Activated naive CD4-positive, alpha-beta T cell treated with anti-CD3 and anti-CD28 coated beads for 36 hours (primary cell): ENCODE measurements at regions of chr18 and their contacts with region 1.

Region 1: DNA sequence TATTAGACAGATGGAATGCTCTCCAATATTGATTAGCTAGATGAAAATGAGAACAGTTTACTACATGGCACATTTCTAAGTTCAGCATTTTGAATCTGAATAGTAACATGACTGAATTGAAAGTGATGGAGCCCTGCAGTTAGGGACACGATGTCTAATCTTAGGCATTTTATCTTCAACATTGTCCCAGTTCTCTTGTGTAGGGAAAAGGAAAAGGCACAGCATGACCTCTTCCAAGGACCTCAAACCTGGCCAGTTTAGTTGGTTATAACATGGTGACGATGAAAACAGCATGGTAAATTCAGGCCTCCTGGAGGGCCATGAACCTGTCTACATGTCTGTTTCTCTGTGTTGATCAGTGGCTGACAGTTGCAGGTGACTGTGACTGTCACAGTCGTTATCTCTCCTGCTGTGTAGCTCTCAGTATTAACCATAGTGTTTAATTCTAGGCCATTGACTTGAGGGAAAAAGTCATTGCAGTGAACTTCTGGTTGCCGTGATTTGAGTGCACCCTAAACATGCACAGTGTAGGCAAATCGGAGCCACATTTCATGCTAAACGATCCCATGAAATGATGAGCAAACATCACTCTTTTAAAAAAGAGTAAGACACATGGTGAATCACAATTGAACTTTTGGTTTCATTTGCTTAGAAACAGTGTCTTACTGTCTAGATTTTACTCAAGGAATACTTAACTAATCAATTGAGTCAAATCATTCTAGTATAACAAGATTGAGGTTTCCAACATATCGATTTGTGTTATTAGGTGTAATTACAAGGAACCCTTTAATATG is 129.7 kb downstream of the PHLPP1 start:
- DNase-seq: peak; percentile 57
- H3K4me3 Mint-ChIP-seq: no peak overlapping the region
- H3K27ac Mint-ChIP-seq: peak overlapping the region; percentile 24
- H3K4me1 Mint-ChIP-seq: peaks cover 24% of the 10 kb centered on the region
- H3K27me3 Mint-ChIP-seq: no peaks in the 10 kb centered on the region

Region 2: GRCh38 chr18:62281684-62282083 is 563.4 kb before region 1 on chr18:
- CTCF ChIA-PET with region 1: no interaction called
- intact Hi-C with region 1: loop called (anchors 1 kb)
- DNase-seq: no peak
- H3K4me3 Mint-ChIP-seq: no peak overlapping the region
- H3K27ac Mint-ChIP-seq: no peak overlapping the region
- H3K4me1 Mint-ChIP-seq: peaks cover 39% of the 10 kb centered on the region
- H3K27me3 Mint-ChIP-seq: no peaks in the 10 kb centered on the region

Region 3: GRCh38 chr18:62741118-62741566 is 103.9 kb before region 1 on chr18:
- CTCF ChIA-PET with region 1: no interaction called
- intact Hi-C with region 1: loop called (anchors 1 kb)
- DNase-seq: peak; percentile 66
- H3K4me3 Mint-ChIP-seq: no peak overlapping the region
- H3K27ac Mint-ChIP-seq: no peak overlapping the region
- H3K4me1 Mint-ChIP-seq: peaks cover 16% of the 10 kb centered on the region
- H3K27me3 Mint-ChIP-seq: no peaks in the 10 kb centered on the region

Region 4: DNA sequence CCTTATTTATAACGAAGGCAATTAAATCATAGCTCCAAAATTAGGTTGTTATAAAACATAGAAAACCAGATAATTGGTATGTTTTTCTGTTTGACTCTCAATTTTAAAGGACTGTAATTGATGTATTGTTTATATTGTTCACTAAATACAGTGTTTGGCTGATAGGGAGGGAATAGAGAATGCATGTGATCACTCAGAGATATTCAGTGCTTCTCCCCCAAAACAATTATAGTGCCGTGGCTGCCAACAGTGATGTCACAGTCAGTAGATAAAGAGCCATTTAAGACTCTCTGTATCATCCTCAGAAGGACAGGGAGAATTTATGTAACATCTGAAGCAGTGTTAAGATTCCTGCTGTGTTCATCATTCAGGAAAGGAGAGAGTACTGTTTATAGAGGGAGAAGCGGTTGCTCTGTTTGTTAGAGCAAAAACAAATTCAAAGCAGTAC is 60.1 kb before region 1 on chr18:
- CTCF ChIA-PET with region 1: no interaction called
- intact Hi-C with region 1: loop called (anchors 1 kb)
- DNase-seq: no peak
- H3K4me3 Mint-ChIP-seq: no peak overlapping the region
- H3K27ac Mint-ChIP-seq: no peak overlapping the region
- H3K4me1 Mint-ChIP-seq: peaks cover 37% of the 10 kb centered on the region
- H3K27me3 Mint-ChIP-seq: peaks cover 5% of the 10 kb centered on the region

Region 5: DNA sequence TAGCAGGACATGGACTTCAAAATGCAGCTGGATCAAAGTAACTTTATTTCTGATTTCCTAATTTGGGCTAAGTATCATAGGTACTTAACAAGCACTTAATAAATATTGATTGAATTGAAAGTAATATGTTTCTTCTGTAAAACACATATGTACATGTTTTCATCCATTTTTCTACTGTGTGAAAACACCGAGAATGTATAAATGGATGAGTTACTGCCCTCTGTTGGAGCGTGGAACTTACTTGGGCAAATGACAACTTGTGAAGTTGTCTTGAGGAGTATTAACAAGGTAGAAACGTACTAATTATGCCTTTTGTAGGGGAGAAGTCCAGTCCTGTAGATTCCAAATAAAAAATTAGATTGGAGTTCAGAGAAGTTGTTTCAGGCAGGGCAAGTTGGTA is 42.5 kb before region 1 on chr18:
- CTCF ChIA-PET with region 1: no interaction called
- intact Hi-C with region 1: no loop called
- DNase-seq: no peak
- H3K4me3 Mint-ChIP-seq: no peak overlapping the region
- H3K27ac Mint-ChIP-seq: no peak overlapping the region
- H3K4me1 Mint-ChIP-seq: no peaks in the 10 kb centered on the region
- H3K27me3 Mint-ChIP-seq: no peaks in the 10 kb centered on the region

Region 6: GRCh38 chr18:62868645-62869044 is 23.6 kb after region 1 on chr18:
- CTCF ChIA-PET with region 1: no interaction called
- intact Hi-C with region 1: loop called (anchors 1 kb)
- DNase-seq: no peak
- H3K4me3 Mint-ChIP-seq: no peak overlapping the region
- H3K27ac Mint-ChIP-seq: no peak overlapping the region
- H3K4me1 Mint-ChIP-seq: peaks cover 14% of the 10 kb centered on the region
- H3K27me3 Mint-ChIP-seq: no peaks in the 10 kb centered on the region

Region 7: DNA sequence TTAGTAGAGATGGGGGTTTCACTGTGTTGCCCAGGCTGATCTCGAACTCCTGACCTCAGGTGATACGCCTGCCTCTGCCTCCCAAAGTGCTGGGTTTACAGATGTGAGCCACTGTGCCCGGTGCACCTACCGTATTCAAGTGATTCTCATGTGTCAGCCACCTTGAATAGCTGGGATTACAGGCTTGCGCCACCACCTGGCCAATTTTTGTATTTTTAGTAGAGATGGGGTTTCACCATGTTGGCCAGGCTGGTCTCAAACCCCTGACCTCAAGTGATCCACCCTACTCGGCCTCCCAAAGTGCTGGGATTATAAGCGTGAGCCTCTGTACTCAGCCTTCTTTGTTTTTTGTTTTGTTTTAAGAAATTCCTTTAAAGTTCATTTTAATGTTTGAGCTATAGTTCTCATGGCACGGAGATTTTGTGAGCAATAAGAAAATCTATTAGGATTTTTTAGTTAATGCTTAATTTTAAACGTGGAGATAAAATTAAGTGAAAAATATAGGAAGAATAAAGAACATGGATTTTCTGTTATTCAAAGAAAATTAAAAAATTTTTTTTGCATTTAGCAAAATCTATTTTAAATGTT is 112.9 kb after region 1 on chr18:
- CTCF ChIA-PET with region 1: interaction called, 4 read pairs
- intact Hi-C with region 1: loop called (anchors 2 kb)
- DNase-seq: peak; percentile 74
- H3K4me3 Mint-ChIP-seq: no peak overlapping the region
- H3K27ac Mint-ChIP-seq: no peak overlapping the region
- H3K4me1 Mint-ChIP-seq: peaks cover 12% of the 10 kb centered on the region
- H3K27me3 Mint-ChIP-seq: no peaks in the 10 kb centered on the region